ENCODE measurements at regions of chr2 and their contacts with region 1.

Region 1: DNA sequence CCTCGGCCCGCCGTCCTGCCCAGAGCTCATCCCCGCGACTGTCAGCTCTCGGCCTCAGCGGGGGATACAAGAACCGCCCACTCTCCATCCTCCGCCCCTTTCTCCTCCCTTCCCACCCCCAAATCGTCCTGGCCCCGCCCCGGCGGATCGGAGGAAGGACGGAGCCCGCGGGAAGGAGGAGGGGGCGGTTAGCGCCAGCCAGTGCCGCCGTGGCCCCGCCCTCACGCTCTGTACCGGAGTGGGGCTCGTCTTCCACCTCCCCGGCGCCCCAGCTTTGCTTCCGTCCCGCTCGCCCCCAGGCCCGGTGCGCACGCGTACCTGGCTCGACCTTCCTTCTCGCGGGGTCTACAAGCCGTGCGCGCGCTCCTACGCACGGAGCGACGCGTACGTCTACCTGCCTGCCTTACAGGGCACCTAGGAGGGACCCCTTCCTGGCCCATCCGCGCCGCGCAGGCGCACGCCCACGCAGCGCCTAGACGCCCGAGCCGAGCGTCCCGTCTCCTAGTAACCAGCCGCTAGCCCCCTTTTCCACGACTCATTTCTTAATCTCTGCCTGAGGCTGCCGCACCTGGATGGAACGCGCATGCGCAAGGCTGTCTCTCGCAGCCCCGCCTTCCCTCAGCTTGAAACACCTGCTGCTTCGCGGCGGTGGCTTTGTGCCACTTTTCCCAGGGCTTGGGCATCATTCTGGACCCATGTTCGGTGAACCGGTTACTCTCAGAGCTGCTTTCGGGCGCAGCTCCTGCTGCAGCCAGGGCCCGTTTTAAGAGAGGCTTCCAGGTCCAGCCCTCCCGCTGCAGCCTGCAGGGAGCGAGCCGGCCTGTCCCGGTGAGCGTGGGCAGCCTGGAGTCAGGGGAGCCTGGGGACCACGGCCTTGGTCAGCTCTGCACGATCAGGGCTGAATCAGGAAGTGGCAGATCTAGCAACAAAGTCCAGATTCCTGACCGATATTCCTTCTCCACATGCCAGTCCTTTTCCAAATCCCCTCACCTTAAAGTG is at the start of gene C2orf15:
- DNase-seq: peak; percentile 96
- ATAC-seq: peak; percentile 90
- H3K4me3 Mint-ChIP-seq: peak within 1 kb of the TSS; percentile 90
- H3K27ac Mint-ChIP-seq: peak within 1 kb of the TSS; percentile 95
- H3K4me1 Mint-ChIP-seq: peaks cover 15% of the 10 kb centered on the region
- H3K27me3 Mint-ChIP-seq: peaks cover 2% of the 10 kb centered on the region
- total RNA-seq, gene C2orf15: 2.3 TPM

Region 2: DNA sequence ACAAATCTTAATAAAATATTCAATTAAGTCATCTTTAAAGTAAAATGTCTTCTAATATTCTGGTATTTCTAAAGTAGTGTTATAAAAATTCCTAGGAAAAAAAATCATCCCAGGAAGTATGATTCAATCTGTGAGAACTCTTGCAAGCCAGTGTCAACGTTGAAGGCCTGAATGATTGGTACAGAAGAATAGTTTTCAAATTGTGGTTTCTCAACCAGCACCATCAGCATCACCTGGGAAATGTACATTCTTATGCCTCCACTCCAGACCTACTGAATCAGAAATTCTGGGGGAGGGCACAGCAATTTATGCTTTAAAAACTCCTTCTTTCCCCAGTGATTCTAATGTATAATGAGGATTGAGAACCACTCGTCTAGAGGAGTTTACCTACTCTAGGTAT is 62.2 kb before region 1 on chr2:
- POLR2A ChIA-PET with region 1: no interaction called
- DNase-seq: no peak
- ATAC-seq: no peak
- H3K4me3 Mint-ChIP-seq: no peak overlapping the region
- H3K27ac Mint-ChIP-seq: no peak overlapping the region
- H3K4me1 Mint-ChIP-seq: no peaks in the 10 kb centered on the region
- H3K27me3 Mint-ChIP-seq: peaks cover 12% of the 10 kb centered on the region

Region 3: GRCh38 chr2:99154643-99155536 is 13.5 kb after region 1 on chr2 and contains the starts of genes LIPT1 and TSGA10:
- POLR2A ChIA-PET with region 1: interaction called, 40 read pairs
- DNase-seq: peak; percentile 94
- ATAC-seq: peak; percentile 95
- H3K4me3 Mint-ChIP-seq: peak within 1 kb of the TSS; percentile 95
- H3K27ac Mint-ChIP-seq: peak within 1 kb of the TSS; percentile 87
- H3K4me1 Mint-ChIP-seq: peaks cover 31% of the 10 kb centered on the region
- H3K27me3 Mint-ChIP-seq: no peaks in the 10 kb centered on the region
- total RNA-seq, gene LIPT1: 10.1 to 12.1 TPM
- total RNA-seq, gene TSGA10: 8.0 to 11.1 TPM

Region 4: GRCh38 chr2:99169534-99169933 is 28.1 kb after region 1 on chr2:
- POLR2A ChIA-PET with region 1: no interaction called
- DNase-seq: no peak
- ATAC-seq: no peak
- H3K4me3 Mint-ChIP-seq: no peak overlapping the region
- H3K27ac Mint-ChIP-seq: no peak overlapping the region
- H3K4me1 Mint-ChIP-seq: peaks cover 9% of the 10 kb centered on the region
- H3K27me3 Mint-ChIP-seq: no peaks in the 10 kb centered on the region

Region 5: GRCh38 chr2:99180755-99181623 is 39.6 kb after region 1 on chr2 and contains the starts of genes MITD1 and MRPL30:
- POLR2A ChIA-PET with region 1: interaction called, 13 read pairs
- DNase-seq: peak; percentile 87
- ATAC-seq: peak; percentile 95
- H3K4me3 Mint-ChIP-seq: peak within 1 kb of the TSS; percentile 95
- H3K27ac Mint-ChIP-seq: peak within 1 kb of the TSS; percentile 92
- H3K4me1 Mint-ChIP-seq: peaks cover 37% of the 10 kb centered on the region
- H3K27me3 Mint-ChIP-seq: no peaks in the 10 kb centered on the region
- total RNA-seq, gene MITD1: 68.8 to 69.4 TPM
- total RNA-seq, gene MRPL30: 22.2 to 26.5 TPM

Region 6: DNA sequence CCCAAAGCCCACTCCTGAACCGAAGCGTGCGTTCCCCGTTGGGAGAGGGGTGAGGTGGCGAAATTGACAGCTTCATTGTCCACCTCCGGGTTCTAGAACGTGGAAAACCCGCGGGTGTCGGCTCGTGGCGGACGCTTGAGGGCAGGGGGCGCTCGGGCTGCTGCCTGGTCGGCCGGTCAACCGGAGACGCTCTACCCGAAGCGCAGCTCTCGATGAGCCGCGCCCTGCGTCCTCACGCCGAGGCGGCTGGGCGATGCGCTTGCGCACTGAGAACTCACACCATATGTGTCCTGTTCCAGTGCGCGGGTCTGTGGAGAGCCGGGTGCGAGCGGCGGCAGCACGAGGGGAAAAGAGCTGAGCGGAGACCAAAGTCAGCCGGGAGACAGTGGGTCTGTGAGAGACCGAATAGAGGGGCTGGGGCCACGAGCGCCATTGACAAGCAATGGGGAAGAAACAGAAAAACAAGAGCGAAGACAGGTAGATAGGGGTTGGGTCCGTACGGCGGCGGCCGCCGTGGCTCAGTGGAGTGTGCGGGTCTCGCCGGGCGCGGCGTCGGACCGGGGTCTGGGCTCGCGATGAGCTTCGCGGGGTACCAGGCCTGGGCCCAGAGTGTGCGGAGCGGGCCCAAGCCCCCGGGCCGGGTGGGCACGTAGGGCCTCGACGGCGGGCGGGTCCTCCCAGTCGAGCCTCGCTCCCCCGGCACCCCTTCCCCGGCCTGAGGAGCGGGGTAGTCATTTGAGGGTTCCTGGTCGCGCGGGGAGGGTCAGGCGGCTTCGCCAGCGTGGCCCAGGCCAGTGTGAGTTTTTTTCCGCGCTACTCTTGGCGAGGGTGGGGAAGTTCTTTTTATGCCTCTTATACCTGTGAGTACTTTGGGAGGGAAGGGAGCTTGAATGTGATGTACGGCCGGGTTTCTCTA is 196.0 kb after region 1 on chr2 and contains the start of gene EIF5B:
- POLR2A ChIA-PET with region 1: interaction called, 10 read pairs
- DNase-seq: peak; percentile 92
- ATAC-seq: peak; percentile 79
- H3K4me3 Mint-ChIP-seq: no peak within 1 kb of the TSS
- H3K27ac Mint-ChIP-seq: no peak within 1 kb of the TSS
- H3K4me1 Mint-ChIP-seq: peaks cover 33% of the 10 kb centered on the region
- H3K27me3 Mint-ChIP-seq: no peaks in the 10 kb centered on the region
- total RNA-seq, gene EIF5B: 40.3 to 40.9 TPM